Caco-2 (cell line): ENCODE measurements at regions of chr11 and their contacts with region 1.

Region 1: GRCh38 chr11:69863544-69864200 is 44.5 kb upstream of the FGF3 start:
- DNase-seq: no peak
- H3K4me3 ChIP-seq: no peak overlapping the region
- H3K4me3 Mint-ChIP-seq: no peak overlapping the region
- H3K27ac Mint-ChIP-seq: no peak overlapping the region
- H3K4me1 ChIP-seq: no peaks in the 10 kb centered on the region
- H3K4me1 Mint-ChIP-seq: no peaks in the 10 kb centered on the region
- H3K27me3 ChIP-seq: no peaks in the 10 kb centered on the region
- H3K27me3 Mint-ChIP-seq: peaks cover 10% of the 10 kb centered on the region
- CTCF ChIP-seq: no peak

Region 2: GRCh38 chr11:69902337-69902736 is 38.7 kb after region 1 on chr11:
- CTCF ChIA-PET with region 1: no interaction called
- POLR2A ChIA-PET with region 1: interaction called, 11 read pairs
- intact Hi-C with region 1: no loop called
- DNase-seq: no peak
- H3K4me3 ChIP-seq: no peak overlapping the region
- H3K4me3 Mint-ChIP-seq: no peak overlapping the region
- H3K27ac Mint-ChIP-seq: no peak overlapping the region
- H3K4me1 ChIP-seq: peaks cover 15% of the 10 kb centered on the region
- H3K4me1 Mint-ChIP-seq: peaks cover 19% of the 10 kb centered on the region
- H3K27me3 ChIP-seq: no peaks in the 10 kb centered on the region
- H3K27me3 Mint-ChIP-seq: peaks cover 3% of the 10 kb centered on the region
- CTCF ChIP-seq: no peak

Region 3: GRCh38 chr11:70251659-70252321 is 388.1 kb after region 1 on chr11:
- CTCF ChIA-PET with region 1: no interaction called
- POLR2A ChIA-PET with region 1: no interaction called
- intact Hi-C with region 1: no loop called
- DNase-seq: no peak
- H3K4me3 ChIP-seq: no peak overlapping the region
- H3K4me3 Mint-ChIP-seq: no peak overlapping the region
- H3K27ac Mint-ChIP-seq: no peak overlapping the region
- H3K4me1 ChIP-seq: no peaks in the 10 kb centered on the region
- H3K4me1 Mint-ChIP-seq: peaks cover 26% of the 10 kb centered on the region
- H3K27me3 ChIP-seq: no peaks in the 10 kb centered on the region
- H3K27me3 Mint-ChIP-seq: no peaks in the 10 kb centered on the region
- CTCF ChIP-seq: no peak